ENCODE measurements at regions of chrX and their contacts with region 1.

Region 1: DNA sequence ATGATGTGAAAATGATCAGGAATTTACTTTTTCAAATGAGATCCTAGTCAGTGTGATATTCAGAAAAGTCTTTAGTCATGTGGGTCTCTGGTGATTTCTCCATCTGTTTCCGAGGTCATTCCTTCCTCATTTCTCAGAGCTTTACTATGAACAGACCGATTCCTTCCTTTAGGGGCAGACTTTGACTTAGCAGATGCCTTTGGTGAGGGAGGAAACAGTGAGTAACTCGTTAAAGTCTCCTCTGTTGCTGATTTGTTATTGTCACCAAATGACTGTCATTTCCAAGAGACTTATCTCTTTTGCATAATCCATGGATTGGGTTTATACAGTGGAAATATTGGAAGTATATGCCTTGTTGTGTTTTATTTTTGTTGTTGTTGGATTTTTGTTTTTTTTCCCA is 76.2 kb upstream of the CD99 start:
- DNase-seq: no peak
- ATAC-seq: no peak
- H3K4me3 ChIP-seq: no peak overlapping the region
- H3K27ac ChIP-seq: no peak overlapping the region
- H3K4me1 ChIP-seq: no peaks in the 10 kb centered on the region
- H3K27me3 ChIP-seq: no peaks in the 10 kb centered on the region

Region 2: GRCh38 chrX:1657367-1658070 is 957.4 kb before region 1 on chrX:
- intact Hi-C with region 1: no loop called
- DNase-seq: peak in 1 of 2 donors; percentile 25
- ATAC-seq: no peak
- H3K4me3 ChIP-seq: no peak overlapping the region
- H3K27ac ChIP-seq: no peak overlapping the region
- H3K4me1 ChIP-seq: no peaks in the 10 kb centered on the region
- H3K27me3 ChIP-seq: no peaks in the 10 kb centered on the region

Region 3: GRCh38 chrX:2385224-2385623 is 229.7 kb before region 1 on chrX:
- intact Hi-C with region 1: no loop called
- DNase-seq: no peak
- ATAC-seq: no peak
- H3K4me3 ChIP-seq: no peak overlapping the region
- H3K27ac ChIP-seq: no peak overlapping the region
- H3K4me1 ChIP-seq: no peaks in the 10 kb centered on the region
- H3K27me3 ChIP-seq: no peaks in the 10 kb centered on the region

Region 4: DNA sequence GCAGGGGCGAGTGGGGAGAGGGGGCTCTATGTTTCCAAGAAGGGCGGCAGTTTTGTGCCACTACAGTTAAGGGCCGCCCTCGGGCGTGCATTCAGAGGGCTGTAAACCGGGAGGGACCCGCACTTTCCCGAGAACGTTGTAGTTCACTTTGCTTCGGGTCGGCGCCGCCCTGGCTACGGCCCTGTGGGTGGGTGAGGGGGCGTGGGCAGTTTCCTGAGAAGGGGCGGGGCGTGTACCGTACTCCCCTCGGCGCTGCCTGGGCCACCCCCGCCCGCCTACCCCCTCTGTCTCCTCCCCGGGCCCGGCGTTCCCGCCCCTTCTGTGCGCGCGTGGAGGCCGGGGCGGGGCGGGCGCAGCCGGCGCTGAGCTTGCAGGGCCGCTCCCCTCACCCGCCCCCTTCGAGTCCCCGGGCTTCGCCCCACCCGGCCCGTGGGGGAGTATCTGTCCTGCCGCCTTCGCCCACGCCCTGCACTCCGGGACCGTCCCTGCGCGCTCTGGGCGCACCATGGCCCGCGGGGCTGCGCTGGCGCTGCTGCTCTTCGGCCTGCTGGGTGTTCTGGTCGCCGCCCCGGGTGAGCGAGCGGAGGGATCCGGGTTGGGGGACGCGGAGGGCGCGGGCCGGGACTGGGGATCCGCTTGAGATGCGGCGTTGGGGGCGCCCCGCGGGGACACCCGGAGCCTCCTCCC is 76.1 kb after region 1 on chrX and contains the start of gene CD99:
- intact Hi-C with region 1: loop called in 1 of 2 experiments (anchors 10 kb)
- DNase-seq: peak; percentile 94 to 96
- ATAC-seq: peak; percentile 95
- H3K4me3 ChIP-seq: peak within 1 kb of the TSS; percentile 75 to 90
- H3K27ac ChIP-seq: peak within 1 kb of the TSS in 1 of 2 donors; percentile 54
- H3K4me1 ChIP-seq: peaks cover 2 to 5% of the 10 kb centered on the region in 2 donors
- H3K27me3 ChIP-seq: no peaks in the 10 kb centered on the region
- total RNA-seq, gene CD99: 292 to 399 TPM

Measured in aorta (tissue), 5 donors.